Heart right ventricle (tissue), 16 donors: ENCODE measurements at regions of chr2 and their contacts with region 1.

Region 1: DNA sequence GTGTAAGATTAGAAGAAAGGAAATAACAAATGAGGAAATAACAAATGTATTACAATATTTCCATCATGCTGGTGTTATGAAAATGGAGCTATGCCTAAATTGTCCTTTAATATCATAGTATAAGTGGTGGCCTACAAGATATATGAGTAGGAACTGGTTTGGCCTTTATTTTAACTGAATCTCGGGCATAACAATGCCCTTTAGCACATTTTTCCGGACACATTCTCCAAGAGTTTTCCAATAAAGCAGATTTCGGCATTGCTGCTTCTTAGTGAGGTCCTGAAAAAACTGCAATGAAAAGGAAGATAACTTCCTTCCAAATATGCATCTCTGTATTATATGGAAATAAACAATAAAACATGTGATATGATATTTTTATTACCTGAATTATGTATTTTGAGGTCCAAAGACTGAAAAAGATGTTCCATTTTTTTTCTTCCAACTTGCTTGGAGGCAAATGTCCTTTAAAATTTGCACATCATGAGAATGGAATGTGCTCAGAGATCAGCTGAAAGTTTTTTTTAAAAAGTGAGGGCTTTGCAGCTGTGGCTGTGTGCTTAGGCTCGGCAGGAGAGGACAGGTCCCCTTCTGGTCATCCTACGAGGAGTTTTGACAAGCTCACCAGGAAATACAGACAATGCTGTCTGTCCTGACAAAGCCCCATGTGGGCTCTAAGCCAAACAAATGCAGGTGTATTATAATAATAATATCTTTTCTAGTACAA is 132.3 kb upstream of the RND3 start:
- DNase-seq: no peak
- ATAC-seq: peak in 5 of 8 donors; percentile 72 to 89 (median 77)
- H3K4me3 ChIP-seq: no peak overlapping the region
- H3K27ac ChIP-seq: peak overlapping the region in 6 of 10 donors; percentile 3 to 56 (median 35)
- H3K4me1 ChIP-seq: peaks cover 0 to 44% (median 26%) of the 10 kb centered on the region in 9 donors
- H3K27me3 ChIP-seq: no peaks in the 10 kb centered on the region
- CTCF ChIP-seq: no peak

Region 2: GRCh38 chr2:150690870-150691269 is 71.1 kb after region 1 on chr2:
- intact Hi-C with region 1: loop called in 1 of 10 experiments (anchors 5 kb)
- DNase-seq: no peak
- ATAC-seq: no peak
- H3K4me3 ChIP-seq: no peak overlapping the region
- H3K27ac ChIP-seq: no peak overlapping the region
- H3K4me1 ChIP-seq: peaks cover 0 to 3% (median 0%) of the 10 kb centered on the region in 9 donors
- H3K27me3 ChIP-seq: no peaks in the 10 kb centered on the region
- CTCF ChIP-seq: no peak